MCF 10A (cell line): ENCODE measurements at regions of chr6 and their contacts with region 1.

Region 1: GRCh38 chr6:44074439-44075136 is 52.7 kb downstream of the MRPL14 start:
- DNase-seq: peak; percentile 82
- H3K4me3 Mint-ChIP-seq: peak overlapping the region; percentile 71
- H3K27ac Mint-ChIP-seq: no peak overlapping the region
- H3K4me1 Mint-ChIP-seq: peaks cover 25% of the 10 kb centered on the region
- H3K27me3 Mint-ChIP-seq: no peaks in the 10 kb centered on the region
- CTCF ChIP-seq: peak; percentile 84

Region 2: GRCh38 chr6:43723737-43724295 is 350.8 kb before region 1 on chr6:
- CTCF ChIA-PET with region 1: interaction called, 41 read pairs
- POLR2A ChIA-PET with region 1: interaction called, 5 read pairs
- intact Hi-C with region 1: loop called (anchors 1 kb)
- DNase-seq: peak; percentile 90
- H3K4me3 Mint-ChIP-seq: no peak overlapping the region
- H3K27ac Mint-ChIP-seq: no peak overlapping the region
- H3K4me1 Mint-ChIP-seq: peaks cover 31% of the 10 kb centered on the region
- H3K27me3 Mint-ChIP-seq: peaks cover 14% of the 10 kb centered on the region
- CTCF ChIP-seq: peak; percentile 66

Region 3: DNA sequence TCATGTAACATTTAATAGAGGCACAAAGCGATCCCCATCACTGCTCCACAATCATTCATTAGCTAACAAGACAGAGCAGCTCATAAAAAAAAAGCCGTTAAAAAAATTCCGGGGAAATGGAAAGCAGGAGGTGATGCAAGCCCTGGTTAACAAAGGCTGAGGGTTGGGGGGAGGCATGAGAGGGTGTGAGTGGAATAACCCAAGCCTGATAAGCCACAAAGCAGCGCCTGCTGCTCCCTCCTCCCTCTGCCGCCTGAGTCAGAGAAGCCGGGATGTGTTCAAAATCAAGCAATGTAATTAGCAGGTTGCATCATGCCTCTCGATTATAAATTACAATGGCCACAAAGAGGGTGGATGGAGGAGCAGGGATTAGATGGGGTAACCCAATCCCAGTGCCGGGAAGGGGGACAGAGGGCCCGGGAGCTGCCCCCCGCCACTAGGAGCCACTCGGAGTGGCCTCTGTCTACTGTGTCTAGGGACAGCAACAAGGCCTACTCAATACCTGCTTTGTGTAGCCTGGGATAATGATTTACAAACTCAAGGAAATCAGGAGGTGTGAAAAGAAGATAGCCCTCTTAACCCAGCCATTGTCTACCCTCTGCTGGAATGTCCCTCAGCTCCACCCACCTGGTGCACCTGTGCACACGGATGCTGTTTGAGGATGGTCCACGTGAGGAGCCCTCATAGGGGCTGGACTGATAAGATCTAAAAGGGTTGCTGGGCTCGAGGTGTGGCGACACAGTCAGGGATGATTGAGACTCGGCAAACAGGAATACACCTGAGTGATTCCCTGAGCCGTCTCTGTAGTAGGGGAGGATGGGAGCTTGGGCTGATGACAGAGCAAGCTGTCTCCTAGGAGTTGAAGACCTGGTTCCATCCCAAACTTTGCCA is 147.7 kb before region 1 on chr6:
- CTCF ChIA-PET with region 1: interaction called, 18 read pairs
- POLR2A ChIA-PET with region 1: no interaction called
- intact Hi-C with region 1: loop called (anchors 2 kb)
- DNase-seq: peak; percentile 97
- H3K4me3 Mint-ChIP-seq: no peak overlapping the region
- H3K27ac Mint-ChIP-seq: peak overlapping the region; percentile 92
- H3K4me1 Mint-ChIP-seq: peaks cover 31% of the 10 kb centered on the region
- H3K27me3 Mint-ChIP-seq: no peaks in the 10 kb centered on the region
- CTCF ChIP-seq: no peak

Region 4: GRCh38 chr6:44010411-44011349 is 63.9 kb before region 1 on chr6:
- CTCF ChIA-PET with region 1: interaction called, 5 read pairs
- POLR2A ChIA-PET with region 1: no interaction called
- intact Hi-C with region 1: loop called (anchors 1 kb)
- DNase-seq: peak; percentile 91
- H3K4me3 Mint-ChIP-seq: peak overlapping the region; percentile 25
- H3K27ac Mint-ChIP-seq: peak overlapping the region; percentile 79
- H3K4me1 Mint-ChIP-seq: peaks cover 39% of the 10 kb centered on the region
- H3K27me3 Mint-ChIP-seq: no peaks in the 10 kb centered on the region
- CTCF ChIP-seq: no peak

Region 5: GRCh38 chr6:44064089-44064947 is 10.3 kb before region 1 on chr6:
- CTCF ChIA-PET with region 1: interaction called, 32 read pairs
- POLR2A ChIA-PET with region 1: interaction called, 15 read pairs
- intact Hi-C with region 1: no loop called
- DNase-seq: peak; percentile 91
- H3K4me3 Mint-ChIP-seq: no peak overlapping the region
- H3K27ac Mint-ChIP-seq: peak overlapping the region; percentile 57
- H3K4me1 Mint-ChIP-seq: peaks cover 42% of the 10 kb centered on the region
- H3K27me3 Mint-ChIP-seq: no peaks in the 10 kb centered on the region
- CTCF ChIP-seq: no peak